H1 (cell line): ENCODE measurements at regions of chr4 and their contacts with region 1.

Region 1: DNA sequence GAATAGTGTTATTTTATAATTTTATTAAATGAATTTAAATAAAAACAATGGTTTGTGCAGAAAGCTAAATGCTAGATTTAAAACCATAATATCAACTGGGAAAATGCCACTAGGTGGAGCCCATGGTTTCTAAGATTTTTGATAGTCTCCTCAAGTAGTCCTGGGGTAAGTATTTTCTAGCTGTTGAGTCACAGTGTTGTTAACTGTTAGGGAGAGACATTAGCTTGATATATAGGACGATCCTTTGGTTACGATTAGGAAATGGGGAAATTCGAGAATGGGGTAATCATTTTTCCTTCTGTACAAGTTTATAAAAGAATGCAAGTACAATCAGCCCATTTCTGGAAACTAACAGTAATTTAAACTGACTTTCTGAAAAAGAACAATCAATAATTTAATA is 378.4 kb downstream of the ANKRD50 start:
- DNase-seq: peak in 1 of 2 experiments; percentile 5
- H3K4me3 ChIP-seq: no peak overlapping the region
- H3K27ac ChIP-seq: no peak overlapping the region
- H3K4me1 ChIP-seq: no peaks in the 10 kb centered on the region; a peak in 1 of 7 replicates
- H3K27me3 ChIP-seq: no peaks in the 10 kb centered on the region
- CTCF ChIP-seq: peak in 2 of 3 experiments; percentile 28 to 52; a peak in 2 of 4 replicates
- EP300 ChIP-seq: no peak
- POLR2A ChIP-seq: no peak
- RAD21 ChIP-seq: peak; percentile 85 to 86

Region 2: DNA sequence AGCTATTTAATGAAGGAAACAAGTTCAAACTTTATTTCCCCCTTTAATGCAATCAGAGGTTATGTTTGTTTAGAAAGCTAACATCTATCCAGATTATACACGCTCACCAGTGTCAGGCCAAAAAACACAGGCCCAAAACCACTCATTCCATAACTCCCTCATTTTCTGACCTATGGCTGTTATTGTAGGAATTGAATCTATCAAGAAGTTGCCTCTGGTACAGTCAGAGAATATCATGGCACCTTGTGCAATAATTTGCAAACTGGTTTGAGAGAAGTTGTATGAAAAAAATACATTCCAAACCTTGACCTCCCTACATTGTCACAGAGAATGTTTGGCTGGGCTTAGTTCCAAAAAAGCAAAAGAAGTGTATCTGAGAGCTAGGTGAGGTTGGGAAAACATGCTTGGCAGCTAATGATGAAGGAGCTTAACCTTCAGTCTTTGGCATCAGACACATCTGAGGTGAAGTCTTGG is 212.6 kb before region 1 on chr4:
- CTCF ChIA-PET with region 1: no interaction called
- POLR2A ChIA-PET with region 1: no interaction called
- DNase-seq: no peak
- H3K4me3 ChIP-seq: no peak overlapping the region
- H3K27ac ChIP-seq: no peak overlapping the region
- H3K4me1 ChIP-seq: no peaks in the 10 kb centered on the region
- H3K27me3 ChIP-seq: no peaks in the 10 kb centered on the region
- CTCF ChIP-seq: no peak
- EP300 ChIP-seq: no peak
- POLR2A ChIP-seq: no peak
- RAD21 ChIP-seq: no peak

Region 3: GRCh38 chr4:125283707-125284279 is 949.7 kb after region 1 on chr4:
- CTCF ChIA-PET with region 1: interaction called, 24 read pairs
- POLR2A ChIA-PET with region 1: no interaction called
- DNase-seq: no peak
- H3K4me3 ChIP-seq: no peak overlapping the region
- H3K27ac ChIP-seq: no peak overlapping the region
- H3K4me1 ChIP-seq: no peaks in the 10 kb centered on the region
- H3K27me3 ChIP-seq: no peaks in the 10 kb centered on the region
- CTCF ChIP-seq: peak in 2 of 3 experiments; percentile 4 to 20; a peak in 2 of 4 replicates
- EP300 ChIP-seq: no peak
- POLR2A ChIP-seq: no peak
- RAD21 ChIP-seq: peak; percentile 61 to 78